Right cardiac atrium (tissue), 5 donors: ENCODE measurements at regions of chr5 and their contacts with region 1.

Region 1: DNA sequence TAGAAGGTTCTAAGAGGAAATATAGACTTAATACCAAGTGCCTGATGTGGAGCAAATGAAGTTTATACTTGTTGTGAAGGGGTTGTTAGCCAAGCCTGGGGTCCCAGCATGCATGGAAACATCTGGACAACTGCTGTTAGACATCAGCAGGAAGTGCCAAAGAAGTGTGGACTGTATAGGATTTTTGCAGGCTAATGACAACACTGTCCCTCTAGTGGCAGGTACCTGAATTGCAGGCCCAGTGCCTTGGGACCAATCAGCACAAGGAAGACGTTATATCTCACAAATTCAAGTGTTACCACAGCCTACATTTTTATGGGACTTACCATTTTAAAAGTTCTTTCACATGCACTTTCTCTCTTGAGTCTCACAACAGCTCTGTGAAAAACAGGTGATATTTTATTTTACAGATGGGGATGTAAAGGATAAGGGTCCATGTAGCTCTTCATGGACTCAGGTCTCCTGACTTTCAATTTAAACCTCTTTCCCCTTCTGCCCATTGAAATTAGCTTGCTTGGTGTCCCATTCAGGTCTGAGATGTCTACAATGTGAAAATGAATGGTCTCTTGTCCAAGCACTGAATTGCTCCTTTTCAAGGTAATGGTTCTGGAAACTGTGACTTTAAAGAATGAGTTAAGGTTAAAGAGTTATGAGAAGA is 89.0 kb upstream of the MAP1B start:
- DNase-seq: peak in 2 of 3 donors; percentile 30 to 55
- ATAC-seq: peak in 1 of 2 donors; percentile 11
- H3K4me3 ChIP-seq: no peak overlapping the region
- H3K27ac ChIP-seq: no peak overlapping the region
- H3K4me1 ChIP-seq: peaks cover 5% of the 10 kb centered on the region
- H3K27me3 ChIP-seq: no peaks in the 10 kb centered on the region

Region 2: GRCh38 chr5:71828291-71829040 is 189.8 kb before region 1 on chr5:
- intact Hi-C with region 1: no loop called
- DNase-seq: no peak
- ATAC-seq: no peak
- H3K4me3 ChIP-seq: no peak overlapping the region
- H3K27ac ChIP-seq: no peak overlapping the region
- H3K4me1 ChIP-seq: peaks cover 3% of the 10 kb centered on the region
- H3K27me3 ChIP-seq: no peaks in the 10 kb centered on the region

Region 3: DNA sequence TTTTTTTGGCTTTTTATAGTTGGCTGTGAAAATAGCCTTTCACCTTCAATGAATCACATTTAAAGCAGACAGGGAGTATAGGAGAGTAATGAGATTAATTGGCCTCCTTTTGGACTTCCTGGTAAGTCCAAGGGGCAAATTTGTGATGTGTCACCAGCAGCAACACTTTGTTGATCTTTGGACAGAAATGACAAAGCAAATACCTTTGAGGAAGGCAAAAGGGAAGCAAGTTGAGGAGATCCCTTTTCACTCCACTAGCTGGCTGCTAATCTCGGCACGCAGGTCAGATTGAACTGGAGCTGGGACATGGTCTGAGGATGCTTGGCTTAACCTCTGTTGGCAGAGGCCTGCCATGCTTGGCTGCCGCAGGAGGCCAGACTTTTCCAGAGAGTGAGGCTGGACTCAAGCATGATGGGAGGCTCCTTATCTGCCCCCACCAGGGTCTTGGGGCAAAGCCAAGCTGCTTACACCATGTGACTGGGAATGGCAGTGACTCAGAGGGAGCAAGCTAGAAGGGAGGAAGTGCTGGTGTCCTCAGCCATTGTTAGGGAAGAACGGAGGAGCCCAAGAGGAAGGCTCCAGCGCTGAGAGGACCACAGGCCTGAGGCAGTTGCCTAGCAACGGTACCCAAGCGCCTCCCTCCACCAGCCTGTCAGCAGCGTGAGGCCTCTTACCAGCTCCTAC is 85.5 kb before region 1 on chr5:
- intact Hi-C with region 1: loop called in 1 of 4 experiments (anchors 10 kb)
- DNase-seq: peak; percentile 74 to 86 (median 82)
- ATAC-seq: peak; percentile 85 to 94
- H3K4me3 ChIP-seq: no peak overlapping the region
- H3K27ac ChIP-seq: peak overlapping the region; percentile 63
- H3K4me1 ChIP-seq: peaks cover 6% of the 10 kb centered on the region
- H3K27me3 ChIP-seq: no peaks in the 10 kb centered on the region

Region 4: DNA sequence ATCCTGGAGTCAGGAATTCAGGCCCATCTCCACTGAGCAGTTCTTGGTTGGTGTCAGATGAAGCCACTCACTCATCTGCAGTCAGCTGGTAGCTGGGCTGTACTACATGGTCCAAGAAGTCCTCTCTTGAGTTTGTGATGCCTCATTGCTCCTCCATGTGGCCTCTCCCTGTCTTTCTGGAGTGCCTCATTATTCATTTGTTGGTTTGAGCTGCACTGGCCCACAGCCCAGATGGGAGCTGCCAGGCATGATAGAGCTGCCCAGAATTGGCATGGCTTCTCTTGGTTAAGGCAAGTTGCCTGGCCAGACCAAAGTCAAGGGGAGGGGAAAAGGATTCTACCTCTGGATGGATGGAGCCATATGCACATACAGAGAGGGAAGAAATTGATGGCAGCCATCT is 309.9 kb after region 1 on chr5:
- intact Hi-C with region 1: no loop called
- DNase-seq: peak; percentile 30 to 69 (median 66)
- ATAC-seq: peak; percentile 70 to 82
- H3K4me3 ChIP-seq: no peak overlapping the region
- H3K27ac ChIP-seq: no peak overlapping the region
- H3K4me1 ChIP-seq: no peaks in the 10 kb centered on the region
- H3K27me3 ChIP-seq: no peaks in the 10 kb centered on the region